ENCODE measurements at regions of chr11 and their contacts with region 1.

Region 1: GRCh38 chr11:62726915-62727763 is at the start of gene HNRNPUL2:
- DNase-seq: peak; percentile 96 to 100 (median 98)
- ATAC-seq: peak; percentile 77 to 84 (median 82)
- H3K4me3 ChIP-seq: peak within 1 kb of the TSS; percentile 86 to 95
- H3K4me3 Mint-ChIP-seq: peak within 1 kb of the TSS; percentile 95 to 98 (median 98)
- H3K27ac ChIP-seq: peak within 1 kb of the TSS; percentile 94
- H3K27ac Mint-ChIP-seq: peak within 1 kb of the TSS; percentile 98 to 99
- H3K4me1 ChIP-seq: peaks cover 20 to 43% of the 10 kb centered on the region in 2 experiments
- H3K4me1 Mint-ChIP-seq: peaks cover 47 to 62% (median 58%) of the 10 kb centered on the region in 3 donors
- H3K27me3 ChIP-seq: no peaks in the 10 kb centered on the region
- H3K27me3 Mint-ChIP-seq: no peaks in the 10 kb centered on the region
- total RNA-seq, gene HNRNPUL2: 45.8 to 67.8 (median 62.7) TPM

Region 2: DNA sequence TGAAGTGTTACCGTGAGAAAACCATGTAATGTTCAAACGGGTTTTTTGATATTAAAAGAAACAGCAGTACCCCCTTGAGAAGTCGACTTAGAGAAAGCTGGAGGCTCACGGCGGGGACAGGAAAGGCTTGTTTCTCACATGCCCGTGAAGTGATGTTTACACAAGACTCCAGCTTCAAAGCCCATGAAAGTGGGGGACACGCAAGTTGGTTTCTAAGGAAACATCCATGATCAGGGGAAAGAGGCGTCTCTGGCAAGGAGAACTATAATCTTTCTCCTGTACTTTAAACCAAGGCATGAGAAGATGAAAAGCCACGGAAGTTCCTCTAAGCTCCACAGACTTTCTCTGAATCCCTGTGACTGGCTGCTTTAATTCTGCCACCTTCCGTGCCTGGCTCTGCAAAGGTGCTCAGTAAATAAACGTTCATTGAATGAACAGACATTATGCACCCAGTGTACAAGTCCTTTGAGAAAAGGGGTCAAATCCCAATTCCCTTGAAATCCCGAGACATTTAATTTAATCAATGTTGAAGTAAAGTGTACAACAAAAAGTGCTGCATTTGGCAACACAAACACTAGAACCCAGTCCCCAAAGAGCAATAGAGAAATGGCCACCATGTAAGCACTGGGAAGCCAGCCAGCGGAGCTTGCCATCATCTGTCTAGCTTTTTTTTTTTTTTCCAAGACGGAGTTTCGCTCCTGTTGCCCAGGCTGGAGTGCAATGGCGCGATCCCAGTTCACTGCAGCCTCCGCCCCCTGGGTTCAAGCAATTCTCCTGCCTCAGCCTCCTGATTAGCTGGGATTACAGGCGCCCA is 239.2 kb before region 1 on chr11:
- CTCF ChIA-PET with region 1: no interaction called
- POLR2A ChIA-PET with region 1: no interaction called
- DNase-seq: no peak
- ATAC-seq: peak in 1 of 4 experiments; percentile 52
- H3K4me3 ChIP-seq: no peak overlapping the region
- H3K4me3 Mint-ChIP-seq: peak overlapping the region in 1 of 3 donors; percentile 1
- H3K27ac ChIP-seq: no peak overlapping the region
- H3K27ac Mint-ChIP-seq: no peak overlapping the region
- H3K4me1 ChIP-seq: peaks cover 0 to 2% of the 10 kb centered on the region in 2 experiments
- H3K4me1 Mint-ChIP-seq: peaks cover 7 to 10% (median 7%) of the 10 kb centered on the region in 3 donors
- H3K27me3 ChIP-seq: peaks cover 0 to 3% of the 10 kb centered on the region in 2 experiments
- H3K27me3 Mint-ChIP-seq: no peaks in the 10 kb centered on the region

Region 3: GRCh38 chr11:62753736-62754603 is 26.8 kb after region 1 on chr11 and contains the start of gene ZBTB3:
- CTCF ChIA-PET with region 1: interaction called in 1 of 2 experiments, 14 read pairs
- POLR2A ChIA-PET with region 1: interaction called, 3 to 16 read pairs
- DNase-seq: peak; percentile 92 to 99 (median 96)
- ATAC-seq: peak; percentile 94 to 95 (median 95)
- H3K4me3 ChIP-seq: peak within 1 kb of the TSS; percentile 81 to 88
- H3K4me3 Mint-ChIP-seq: peak within 1 kb of the TSS; percentile 83 to 97 (median 91)
- H3K27ac ChIP-seq: peak within 1 kb of the TSS; percentile 76
- H3K27ac Mint-ChIP-seq: peak within 1 kb of the TSS; percentile 96 to 99
- H3K4me1 ChIP-seq: peaks cover 4 to 37% of the 10 kb centered on the region in 2 experiments
- H3K4me1 Mint-ChIP-seq: peaks cover 15 to 30% (median 28%) of the 10 kb centered on the region in 3 donors
- H3K27me3 ChIP-seq: no peaks in the 10 kb centered on the region
- H3K27me3 Mint-ChIP-seq: no peaks in the 10 kb centered on the region
- total RNA-seq, gene ZBTB3: 5.9 to 24.6 (median 22.9) TPM

Region 4: DNA sequence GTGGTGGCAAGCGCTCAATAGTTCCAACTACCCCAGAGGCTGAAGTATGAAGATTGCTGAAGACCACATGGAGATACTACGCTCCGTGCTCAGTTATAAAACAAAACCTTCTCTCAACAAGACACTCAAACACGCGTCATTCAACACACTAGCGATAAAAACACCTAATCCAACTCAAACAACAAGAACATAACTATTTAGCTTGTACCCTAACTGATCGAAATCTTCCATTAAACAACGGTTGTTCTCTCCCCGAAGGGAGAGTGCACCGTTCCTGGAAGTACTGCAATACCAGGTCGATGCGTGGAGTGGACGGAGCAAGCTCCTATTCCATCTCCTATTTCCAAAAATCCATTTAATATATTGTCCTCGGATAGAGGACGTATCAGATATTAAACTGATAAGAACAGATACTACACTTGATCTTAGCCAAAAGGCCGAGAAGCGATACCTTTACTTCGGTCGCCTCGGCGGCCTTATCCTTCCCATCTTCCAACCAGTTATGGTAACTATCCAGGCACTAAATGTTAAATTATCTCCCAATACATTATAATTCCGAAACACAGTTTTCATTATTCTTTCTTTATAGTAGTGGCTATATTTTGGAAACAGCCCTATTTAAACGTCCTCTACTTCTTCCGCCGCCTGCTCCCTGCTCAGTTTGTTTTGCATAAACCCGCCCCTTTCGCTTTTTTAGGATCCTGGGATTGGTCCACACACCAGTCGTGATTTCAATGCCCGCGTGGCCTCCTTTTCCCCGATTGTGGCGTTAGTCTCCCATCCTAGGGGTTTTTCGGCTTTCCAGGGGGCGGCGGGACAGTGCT is 114.4 kb after region 1 on chr11:
- CTCF ChIA-PET with region 1: no interaction called
- POLR2A ChIA-PET with region 1: interaction called in 1 of 2 experiments, 12 read pairs
- DNase-seq: peak; percentile 59 to 92 (median 83)
- ATAC-seq: peak; percentile 56 to 65 (median 60)
- H3K4me3 ChIP-seq: peak overlapping the region; percentile 54 to 91
- H3K4me3 Mint-ChIP-seq: no peak overlapping the region
- H3K27ac ChIP-seq: peak overlapping the region; percentile 100
- H3K27ac Mint-ChIP-seq: no peak overlapping the region
- H3K4me1 ChIP-seq: peaks cover 4 to 41% of the 10 kb centered on the region in 2 experiments
- H3K4me1 Mint-ChIP-seq: peaks cover 15 to 22% (median 19%) of the 10 kb centered on the region in 3 donors
- H3K27me3 ChIP-seq: no peaks in the 10 kb centered on the region
- H3K27me3 Mint-ChIP-seq: no peaks in the 10 kb centered on the region